ENCODE measurements at regions of chr1 and their contacts with region 1.

Region 1: GRCh38 chr1:216606047-216606637 is 117.1 kb downstream of the ESRRG start:
- DNase-seq: no peak
- H3K4me3 ChIP-seq: no peak overlapping the region
- H3K27ac ChIP-seq: no peak overlapping the region
- H3K27me3 ChIP-seq: no peaks in the 10 kb centered on the region
- CTCF ChIP-seq: no peak

Region 2: DNA sequence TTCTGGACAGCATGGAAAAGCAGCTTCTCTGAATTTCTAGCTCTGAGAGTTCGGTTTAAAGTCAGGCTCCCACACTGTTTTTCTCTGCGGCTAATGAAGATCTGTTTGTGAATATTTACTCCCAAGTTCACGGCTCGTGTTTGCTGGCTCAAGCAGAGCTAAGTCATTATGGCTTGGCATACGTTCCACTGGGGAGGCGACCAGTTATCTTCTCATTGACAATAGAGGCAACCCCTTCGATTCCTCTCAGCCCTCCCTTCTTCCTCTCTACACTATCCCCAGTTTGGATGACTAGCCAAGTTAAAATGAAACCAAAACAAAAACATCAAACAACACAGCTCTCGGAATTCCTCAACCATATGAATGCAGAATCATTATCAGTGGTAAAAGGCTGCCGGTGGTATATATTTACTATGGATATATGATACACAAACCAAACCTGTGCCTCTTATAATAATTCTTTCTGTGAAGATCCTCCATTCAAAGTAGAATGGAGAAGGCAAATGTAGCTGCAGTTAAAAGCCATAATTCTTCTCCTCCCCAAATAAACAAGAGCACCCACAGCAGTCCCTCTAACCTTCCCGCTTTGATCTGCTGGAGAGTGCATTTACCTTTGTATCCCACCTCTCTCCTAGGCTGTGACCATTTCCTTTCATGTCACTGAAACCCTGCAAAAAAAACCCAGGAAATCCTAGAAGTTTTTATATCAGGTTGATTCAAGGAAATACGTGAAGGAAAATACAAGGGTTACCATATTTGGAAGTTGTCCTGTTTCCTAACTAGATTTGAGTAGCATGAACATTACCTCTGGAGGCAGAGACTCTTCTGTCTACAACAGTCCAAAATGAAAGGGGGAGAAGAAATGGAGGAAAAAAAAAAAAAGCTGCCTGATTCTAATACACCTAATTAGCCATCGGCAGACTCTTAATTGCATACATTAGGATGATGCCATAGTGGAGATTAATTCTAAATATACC is 74.6 kb before region 1 on chr1:
- intact Hi-C with region 1: no loop called
- DNase-seq: no peak
- H3K4me3 ChIP-seq: peak overlapping the region; percentile 26 to 73 (median 56)
- H3K27ac ChIP-seq: peak overlapping the region in 4 of 59 donors; percentile 7 to 52 (median 46)
- H3K27me3 ChIP-seq: no peaks in the 10 kb centered on the region
- CTCF ChIP-seq: no peak

Region 3: GRCh38 chr1:216587715-216588114 is 18.4 kb before region 1 on chr1:
- intact Hi-C with region 1: no loop called
- DNase-seq: no peak
- H3K4me3 ChIP-seq: no peak overlapping the region
- H3K27ac ChIP-seq: no peak overlapping the region
- H3K27me3 ChIP-seq: no peaks in the 10 kb centered on the region
- CTCF ChIP-seq: no peak

Region 4: DNA sequence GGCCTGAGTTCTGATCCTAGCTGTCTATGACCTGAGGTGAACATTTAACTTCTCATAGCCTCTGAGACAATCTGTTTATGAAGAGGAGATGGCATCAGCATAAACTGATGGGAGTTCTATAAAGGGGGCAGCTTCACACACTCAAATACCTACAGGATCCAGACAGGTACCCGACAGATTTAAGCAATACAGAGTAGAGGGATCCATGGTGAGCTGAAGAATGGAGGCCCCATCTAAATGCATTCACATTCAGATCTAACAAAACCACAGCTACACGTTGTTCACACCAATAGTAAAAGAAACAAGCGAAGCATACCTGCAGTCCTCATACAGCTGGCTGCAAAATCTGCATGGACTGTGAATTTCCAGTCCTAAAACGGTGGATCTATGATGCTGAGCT is 165.8 kb after region 1 on chr1:
- intact Hi-C with region 1: loop called in 1 of 2 experiments (anchors 5 kb)
- DNase-seq: no peak
- H3K4me3 ChIP-seq: no peak overlapping the region
- H3K27ac ChIP-seq: no peak overlapping the region
- H3K27me3 ChIP-seq: no peaks in the 10 kb centered on the region
- CTCF ChIP-seq: no peak